ENCODE measurements at regions of chr2 and their contacts with region 1.

Region 1: DNA sequence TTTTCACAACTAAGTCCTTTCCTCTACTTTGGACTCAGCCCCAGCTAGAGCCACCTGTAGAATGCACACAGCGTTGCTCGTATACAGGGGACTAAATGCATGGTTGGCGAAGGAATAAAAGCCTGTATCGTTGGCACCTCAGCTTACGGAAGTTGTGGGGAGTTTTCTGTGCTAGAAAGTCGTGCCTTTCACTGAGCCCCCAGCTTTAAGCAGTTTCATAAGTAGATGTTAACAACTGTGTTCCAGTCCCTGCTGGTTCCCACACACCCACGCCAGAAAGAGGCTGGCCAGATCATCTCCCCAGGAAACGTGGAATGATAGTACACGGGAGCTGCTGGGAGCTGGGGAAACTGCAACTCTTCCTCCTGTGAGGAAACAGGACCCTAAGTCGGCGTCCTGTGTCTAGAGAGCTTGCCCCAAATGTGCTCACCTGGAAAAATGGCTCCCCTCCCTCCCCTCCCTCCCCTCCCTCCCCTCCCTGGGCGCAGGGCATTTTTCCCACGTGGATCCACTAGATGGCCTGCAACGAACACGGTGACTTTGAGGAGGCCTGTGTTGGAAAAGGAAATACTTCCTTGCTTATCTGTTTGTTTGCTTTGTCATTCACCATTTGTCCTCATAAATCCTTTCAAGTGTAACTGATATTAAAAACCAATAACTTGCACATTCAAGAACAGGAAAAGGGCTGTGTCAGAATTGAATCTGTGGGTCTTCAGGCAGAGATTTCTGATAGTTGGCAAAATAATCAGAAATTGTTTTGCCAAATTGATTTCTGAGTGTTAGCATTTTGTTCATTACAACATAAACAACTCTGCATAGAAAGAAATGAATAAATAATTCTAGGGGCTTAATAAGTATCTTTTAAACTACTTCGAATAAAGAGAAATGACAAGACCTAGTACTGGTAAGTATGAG is 43.9 kb upstream of the RFX8 start:
- DNase-seq: peak; percentile 61
- H3K4me3 ChIP-seq: no peak overlapping the region
- H3K27ac ChIP-seq: peak overlapping the region; percentile 94
- H3K4me1 ChIP-seq: peaks cover 57% of the 10 kb centered on the region
- H3K27me3 ChIP-seq: no peaks in the 10 kb centered on the region
- CTCF ChIP-seq: peak; percentile 18 to 49
- POLR2A ChIP-seq: no peak

Region 2: DNA sequence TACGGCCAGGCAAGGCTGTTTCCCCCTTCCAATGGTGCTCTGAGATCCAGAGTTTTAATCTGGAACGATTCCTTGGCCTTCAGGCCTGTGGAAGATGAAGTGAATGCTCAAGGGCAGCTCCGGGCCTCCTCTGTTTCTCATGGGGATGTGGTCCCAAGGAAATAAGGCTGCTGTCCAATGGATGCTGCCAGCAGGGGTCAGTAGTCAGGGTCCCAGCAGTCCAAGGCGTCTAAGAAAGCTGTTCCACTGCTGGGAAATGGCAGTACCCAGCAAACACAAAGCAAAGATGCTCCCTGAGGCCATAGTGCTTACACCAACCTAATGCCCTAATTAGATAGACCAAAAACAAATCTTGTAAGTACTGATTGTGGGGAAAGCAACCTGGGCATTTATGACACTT is 1036.1 kb before region 1 on chr2:
- CTCF ChIA-PET with region 1: no interaction called
- POLR2A ChIA-PET with region 1: no interaction called
- dilution Hi-C with region 1: no loop called
- intact Hi-C with region 1: no loop called
- DNase-seq: no peak
- H3K4me3 ChIP-seq: no peak overlapping the region
- H3K27ac ChIP-seq: no peak overlapping the region
- H3K4me1 ChIP-seq: no peaks in the 10 kb centered on the region
- H3K27me3 ChIP-seq: no peaks in the 10 kb centered on the region
- CTCF ChIP-seq: peak in 1 of 2 donors; percentile 11
- POLR2A ChIP-seq: no peak

Region 3: DNA sequence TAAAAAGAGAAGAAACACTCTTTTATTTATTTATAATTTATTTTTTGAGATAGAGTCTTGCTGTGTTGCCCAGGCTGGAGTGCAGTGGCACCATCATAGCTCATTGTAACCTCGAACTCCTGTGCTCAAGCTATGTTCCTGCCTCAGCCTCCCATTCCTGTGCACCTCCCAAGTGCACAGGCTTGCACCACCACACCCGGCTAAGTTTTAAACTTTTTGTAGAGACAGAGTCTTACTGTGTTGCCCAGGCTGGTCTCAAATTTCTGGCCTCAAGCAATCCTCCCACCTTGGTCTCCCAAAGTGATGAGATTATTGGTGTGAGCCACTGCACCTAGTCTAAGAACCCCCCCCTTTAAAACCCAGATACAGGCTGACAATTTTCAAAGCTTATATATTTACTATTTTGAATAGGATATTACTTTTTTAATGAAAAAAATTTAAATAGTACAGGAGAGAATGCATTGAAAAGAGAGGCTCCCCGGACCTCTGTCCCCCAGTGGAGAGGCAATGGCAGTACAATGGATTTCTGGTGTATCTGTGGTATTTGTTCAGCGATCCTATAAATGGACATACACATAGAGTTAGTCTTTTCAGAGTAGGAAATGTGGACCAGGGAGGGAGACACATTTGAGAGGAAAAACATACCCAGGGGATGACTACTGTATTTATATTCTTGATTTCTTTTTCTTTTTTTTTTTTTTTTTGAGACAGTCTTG is 314.3 kb before region 1 on chr2:
- CTCF ChIA-PET with region 1: no interaction called
- POLR2A ChIA-PET with region 1: no interaction called
- dilution Hi-C with region 1: no loop called
- intact Hi-C with region 1: no loop called
- DNase-seq: no peak
- H3K4me3 ChIP-seq: no peak overlapping the region
- H3K27ac ChIP-seq: no peak overlapping the region
- H3K4me1 ChIP-seq: peaks cover 6% of the 10 kb centered on the region
- H3K27me3 ChIP-seq: no peaks in the 10 kb centered on the region
- CTCF ChIP-seq: peak in 1 of 2 donors; percentile 5
- POLR2A ChIP-seq: no peak

Region 4: DNA sequence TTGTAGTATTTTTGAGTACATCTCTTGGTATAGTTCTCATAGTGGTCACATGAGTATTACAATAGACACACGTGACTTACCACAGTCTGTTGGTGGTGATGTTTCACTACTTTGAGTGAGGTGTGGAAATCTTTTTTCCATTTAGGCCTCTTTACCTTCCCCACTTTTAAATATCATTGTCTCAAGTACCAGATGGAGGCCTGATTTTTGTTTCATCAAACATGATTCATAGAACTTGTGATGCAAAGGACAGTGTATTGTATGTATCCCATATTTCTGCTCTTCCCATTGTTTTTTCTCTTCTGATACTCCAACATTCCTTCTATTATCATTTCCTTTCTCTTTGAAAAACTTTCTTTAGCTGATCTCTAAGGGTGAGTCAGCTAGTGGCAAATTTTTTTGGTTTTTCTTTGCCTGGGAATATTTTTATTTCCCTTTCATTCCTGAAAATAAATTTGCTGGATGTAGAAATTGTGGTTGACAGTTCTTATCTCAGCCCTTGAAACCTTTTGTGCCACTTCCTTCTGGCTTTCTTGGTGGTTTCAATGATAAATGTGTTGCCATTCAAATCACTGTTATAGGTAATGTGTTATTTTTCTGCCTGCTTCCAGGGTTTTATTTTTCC is 76.7 kb before region 1 on chr2:
- CTCF ChIA-PET with region 1: no interaction called
- POLR2A ChIA-PET with region 1: no interaction called
- dilution Hi-C with region 1: no loop called
- intact Hi-C with region 1: loop called (anchors 1 kb)
- DNase-seq: peak; percentile 63
- H3K4me3 ChIP-seq: no peak overlapping the region
- H3K27ac ChIP-seq: peak overlapping the region; percentile 42
- H3K4me1 ChIP-seq: peaks cover 13% of the 10 kb centered on the region
- H3K27me3 ChIP-seq: no peaks in the 10 kb centered on the region
- CTCF ChIP-seq: no peak
- POLR2A ChIP-seq: no peak

Region 5: DNA sequence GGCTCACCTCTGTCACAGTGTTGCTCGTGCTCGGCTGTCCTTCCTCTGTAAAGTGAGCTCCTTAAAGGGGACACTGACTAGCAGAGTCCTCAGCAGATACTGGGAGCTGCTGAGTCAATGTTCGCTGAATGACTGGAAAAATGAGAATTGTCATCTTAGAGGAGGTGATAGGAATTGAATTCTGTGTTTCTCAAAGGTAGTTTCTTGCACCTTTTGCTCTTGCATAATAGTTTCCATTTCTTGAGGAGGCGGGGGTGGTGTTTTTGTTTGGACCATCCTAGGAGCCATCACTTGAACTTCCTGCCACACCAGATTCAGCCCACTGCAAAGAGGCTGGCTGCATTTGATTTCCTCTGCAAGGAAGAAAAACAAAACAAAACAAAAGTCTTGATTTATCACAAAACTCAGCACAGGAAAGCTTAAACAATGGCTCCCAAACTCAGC is 32.6 kb before region 1 on chr2:
- CTCF ChIA-PET with region 1: interaction called, 4 read pairs
- POLR2A ChIA-PET with region 1: no interaction called
- dilution Hi-C with region 1: no loop called
- intact Hi-C with region 1: loop called (anchors 1 kb)
- DNase-seq: peak; percentile 85
- H3K4me3 ChIP-seq: peak overlapping the region in 1 of 3 experiments; percentile 2
- H3K27ac ChIP-seq: peak overlapping the region; percentile 26
- H3K4me1 ChIP-seq: peaks cover 17% of the 10 kb centered on the region
- H3K27me3 ChIP-seq: no peaks in the 10 kb centered on the region
- CTCF ChIP-seq: no peak
- POLR2A ChIP-seq: no peak

Region 6: GRCh38 chr2:101558740-101559519 is 40.1 kb after region 1 on chr2:
- CTCF ChIA-PET with region 1: no interaction called
- POLR2A ChIA-PET with region 1: no interaction called
- dilution Hi-C with region 1: no loop called
- intact Hi-C with region 1: loop called (anchors 1 kb)
- DNase-seq: peak; percentile 72
- H3K4me3 ChIP-seq: no peak overlapping the region
- H3K27ac ChIP-seq: peak overlapping the region; percentile 32
- H3K4me1 ChIP-seq: peaks cover 18% of the 10 kb centered on the region
- H3K27me3 ChIP-seq: no peaks in the 10 kb centered on the region
- CTCF ChIP-seq: no peak
- POLR2A ChIP-seq: no peak

Region 7: GRCh38 chr2:101697124-101698013 is 178.5 kb after region 1 on chr2 and contains the start of gene MAP4K4:
- CTCF ChIA-PET with region 1: interaction called, 5 read pairs
- POLR2A ChIA-PET with region 1: interaction called, 4 read pairs
- dilution Hi-C with region 1: no loop called
- intact Hi-C with region 1: loop called (anchors 1 kb)
- DNase-seq: peak; percentile 67
- H3K4me3 ChIP-seq: peak within 1 kb of the TSS; percentile 55 to 98 (median 96)
- H3K27ac ChIP-seq: peak within 1 kb of the TSS; percentile 85
- H3K4me1 ChIP-seq: peaks cover 20% of the 10 kb centered on the region
- H3K27me3 ChIP-seq: no peaks in the 10 kb centered on the region
- CTCF ChIP-seq: peak in 1 of 2 donors; percentile 11
- POLR2A ChIP-seq: peak; percentile 88
- total RNA-seq, gene MAP4K4: 251 and 269 TPM in 2 replicates

Region 8: GRCh38 chr2:101770726-101771125 is 251.9 kb after region 1 on chr2:
- CTCF ChIA-PET with region 1: interaction called, 4 read pairs
- POLR2A ChIA-PET with region 1: no interaction called
- dilution Hi-C with region 1: no loop called
- intact Hi-C with region 1: loop called (anchors 5 kb)
- DNase-seq: peak; percentile 58
- H3K4me3 ChIP-seq: no peak overlapping the region
- H3K27ac ChIP-seq: peak overlapping the region; percentile 5
- H3K4me1 ChIP-seq: peaks cover 68% of the 10 kb centered on the region
- H3K27me3 ChIP-seq: no peaks in the 10 kb centered on the region
- CTCF ChIP-seq: peak in 1 of 2 donors; percentile 28
- POLR2A ChIP-seq: no peak

Measured in endothelial cell of umbilical vein (primary cell).